PC-3 (cell line): ENCODE measurements at regions of chr14 and their contacts with region 1.

Region 1: DNA sequence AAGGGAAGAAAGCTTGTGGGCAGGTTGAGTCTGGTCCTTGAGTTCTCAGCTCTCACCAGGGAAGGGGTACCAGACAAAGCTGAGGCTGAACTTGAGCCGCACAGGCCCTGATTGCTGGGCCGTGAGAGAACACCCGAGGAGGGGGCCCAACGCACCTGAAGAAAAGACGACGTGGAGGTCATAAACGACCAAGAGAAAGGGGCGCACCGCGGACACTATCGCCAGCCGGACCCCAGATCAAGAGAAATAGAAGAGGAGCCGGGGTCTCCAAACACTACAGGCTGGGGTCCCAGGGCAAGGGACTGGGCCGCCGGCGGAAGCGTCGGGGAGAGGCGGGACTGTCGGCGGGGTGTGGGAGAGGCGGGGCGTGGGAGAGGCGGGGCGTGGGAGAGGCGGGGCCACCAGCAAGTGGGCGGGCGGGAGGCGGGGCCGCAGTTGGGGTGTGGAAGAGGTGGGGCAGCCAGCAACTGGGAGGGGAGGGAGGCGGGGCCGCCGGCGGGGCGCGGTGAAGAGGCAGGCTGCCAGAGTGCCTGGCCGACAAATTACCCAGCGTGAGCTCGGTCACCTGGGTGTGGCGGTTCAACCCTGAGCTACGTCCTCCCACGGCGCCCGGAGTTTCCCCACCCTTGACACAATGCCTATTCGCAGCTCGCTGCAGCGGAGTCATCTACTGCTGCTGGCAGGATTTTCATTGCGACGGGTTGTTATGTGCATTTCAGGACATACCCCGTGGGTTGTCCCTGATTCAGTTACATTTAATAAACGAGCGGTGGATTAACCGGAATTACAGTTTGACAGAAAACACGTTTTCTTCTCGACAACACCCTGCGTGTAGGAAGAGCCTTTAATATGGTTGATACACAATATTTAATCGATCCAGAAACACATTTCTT is 15.5 kb upstream of the NEMF start:
- DNase-seq: peak; percentile 98
- ATAC-seq: peak; percentile 95
- H3K4me3 ChIP-seq: peak overlapping the region; percentile 71
- H3K27ac ChIP-seq: peak overlapping the region; percentile 67
- H3K4me1 ChIP-seq: peaks cover 33% of the 10 kb centered on the region
- H3K27me3 ChIP-seq: no peaks in the 10 kb centered on the region
- CTCF ChIP-seq: no peak

Region 2: GRCh38 chr14:49852301-49853157 is 15.5 kb before region 1 on chr14 and contains the start of gene NEMF:
- CTCF ChIA-PET with region 1: interaction called, 45 read pairs
- POLR2A ChIA-PET with region 1: interaction called, 8 read pairs
- intact Hi-C with region 1: no loop called
- DNase-seq: peak; percentile 95
- ATAC-seq: peak; percentile 66
- H3K4me3 ChIP-seq: peak within 1 kb of the TSS; percentile 87
- H3K27ac ChIP-seq: peak within 1 kb of the TSS; percentile 31
- H3K4me1 ChIP-seq: peaks cover 32% of the 10 kb centered on the region
- H3K27me3 ChIP-seq: no peaks in the 10 kb centered on the region
- CTCF ChIP-seq: peak; percentile 98
- total RNA-seq, gene NEMF: 52.9 and 54.0 TPM in 2 replicates

Region 3: GRCh38 chr14:49971156-49972130 is 103.4 kb after region 1 on chr14:
- CTCF ChIA-PET with region 1: interaction called, 6 read pairs
- POLR2A ChIA-PET with region 1: no interaction called
- intact Hi-C with region 1: loop called (anchors 1 kb)
- DNase-seq: peak; percentile 43
- ATAC-seq: peak; percentile 0
- H3K4me3 ChIP-seq: peak overlapping the region; percentile 38
- H3K27ac ChIP-seq: peak overlapping the region; percentile 95
- H3K4me1 ChIP-seq: peaks cover 79% of the 10 kb centered on the region
- H3K27me3 ChIP-seq: no peaks in the 10 kb centered on the region
- CTCF ChIP-seq: no peak

Region 4: GRCh38 chr14:50070840-50071548 is 202.9 kb after region 1 on chr14:
- CTCF ChIA-PET with region 1: interaction called, 12 read pairs
- POLR2A ChIA-PET with region 1: interaction called, 3 read pairs
- intact Hi-C with region 1: no loop called
- DNase-seq: no peak
- ATAC-seq: no peak
- H3K4me3 ChIP-seq: no peak overlapping the region
- H3K27ac ChIP-seq: no peak overlapping the region
- H3K4me1 ChIP-seq: peaks cover 15% of the 10 kb centered on the region
- H3K27me3 ChIP-seq: no peaks in the 10 kb centered on the region
- CTCF ChIP-seq: no peak